Calu3 (cell line): ENCODE measurements at regions of chr3 and their contacts with region 1.

Region 1: GRCh38 chr3:154799788-154800187 is 280.3 kb upstream of the MME start:
- DNase-seq: no peak
- H3K4me3 Mint-ChIP-seq: no peak overlapping the region
- H3K27ac Mint-ChIP-seq: no peak overlapping the region
- H3K4me1 Mint-ChIP-seq: no peaks in the 10 kb centered on the region
- H3K27me3 Mint-ChIP-seq: no peaks in the 10 kb centered on the region
- CTCF ChIP-seq: no peak

Region 2: GRCh38 chr3:154835639-154836038 is 35.9 kb after region 1 on chr3:
- CTCF ChIA-PET with region 1: no interaction called
- intact Hi-C with region 1: loop called (anchors 1 kb)
- DNase-seq: no peak
- H3K4me3 Mint-ChIP-seq: no peak overlapping the region
- H3K27ac Mint-ChIP-seq: no peak overlapping the region
- H3K4me1 Mint-ChIP-seq: no peaks in the 10 kb centered on the region
- H3K27me3 Mint-ChIP-seq: no peaks in the 10 kb centered on the region
- CTCF ChIP-seq: no peak